ENCODE measurements at regions of chr19 and their contacts with region 1.

Region 1: GRCh38 chr19:56393119-56394012 is at the start of gene ZNF582:
- DNase-seq: peak; percentile 97
- ATAC-seq: peak; percentile 99
- H3K4me3 Mint-ChIP-seq: peak within 1 kb of the TSS; percentile 84
- H3K27ac Mint-ChIP-seq: peak within 1 kb of the TSS; percentile 96
- H3K4me1 Mint-ChIP-seq: peaks cover 11% of the 10 kb centered on the region
- H3K27me3 Mint-ChIP-seq: no peaks in the 10 kb centered on the region
- total RNA-seq, gene ZNF582: 0.98 to 1.8 TPM

Region 2: GRCh38 chr19:55301459-55302317 is 1091.7 kb before region 1 on chr19:
- CTCF ChIA-PET with region 1: no interaction called
- POLR2A ChIA-PET with region 1: no interaction called
- intact Hi-C with region 1: no loop called
- DNase-seq: peak; percentile 97
- ATAC-seq: peak; percentile 90
- H3K4me3 Mint-ChIP-seq: peak overlapping the region; percentile 81
- H3K27ac Mint-ChIP-seq: peak overlapping the region; percentile 90
- H3K4me1 Mint-ChIP-seq: peaks cover 6% of the 10 kb centered on the region
- H3K27me3 Mint-ChIP-seq: no peaks in the 10 kb centered on the region

Region 3: GRCh38 chr19:56321989-56322440 is 71.4 kb before region 1 on chr19:
- CTCF ChIA-PET with region 1: no interaction called
- POLR2A ChIA-PET with region 1: no interaction called
- intact Hi-C with region 1: no loop called
- DNase-seq: no peak
- ATAC-seq: no peak
- H3K4me3 Mint-ChIP-seq: no peak overlapping the region
- H3K27ac Mint-ChIP-seq: no peak overlapping the region
- H3K4me1 Mint-ChIP-seq: no peaks in the 10 kb centered on the region
- H3K27me3 Mint-ChIP-seq: peaks cover 8% of the 10 kb centered on the region

Region 4: GRCh38 chr19:56367829-56368711 is 25.3 kb before region 1 on chr19:
- CTCF ChIA-PET with region 1: interaction called, 11 read pairs
- POLR2A ChIA-PET with region 1: no interaction called
- intact Hi-C with region 1: loop called in 1 of 2 experiments (anchors 1 kb)
- DNase-seq: peak; percentile 92
- ATAC-seq: peak; percentile 99
- H3K4me3 Mint-ChIP-seq: peak overlapping the region; percentile 95
- H3K27ac Mint-ChIP-seq: peak overlapping the region; percentile 89
- H3K4me1 Mint-ChIP-seq: peaks cover 19% of the 10 kb centered on the region
- H3K27me3 Mint-ChIP-seq: no peaks in the 10 kb centered on the region

Region 5: DNA sequence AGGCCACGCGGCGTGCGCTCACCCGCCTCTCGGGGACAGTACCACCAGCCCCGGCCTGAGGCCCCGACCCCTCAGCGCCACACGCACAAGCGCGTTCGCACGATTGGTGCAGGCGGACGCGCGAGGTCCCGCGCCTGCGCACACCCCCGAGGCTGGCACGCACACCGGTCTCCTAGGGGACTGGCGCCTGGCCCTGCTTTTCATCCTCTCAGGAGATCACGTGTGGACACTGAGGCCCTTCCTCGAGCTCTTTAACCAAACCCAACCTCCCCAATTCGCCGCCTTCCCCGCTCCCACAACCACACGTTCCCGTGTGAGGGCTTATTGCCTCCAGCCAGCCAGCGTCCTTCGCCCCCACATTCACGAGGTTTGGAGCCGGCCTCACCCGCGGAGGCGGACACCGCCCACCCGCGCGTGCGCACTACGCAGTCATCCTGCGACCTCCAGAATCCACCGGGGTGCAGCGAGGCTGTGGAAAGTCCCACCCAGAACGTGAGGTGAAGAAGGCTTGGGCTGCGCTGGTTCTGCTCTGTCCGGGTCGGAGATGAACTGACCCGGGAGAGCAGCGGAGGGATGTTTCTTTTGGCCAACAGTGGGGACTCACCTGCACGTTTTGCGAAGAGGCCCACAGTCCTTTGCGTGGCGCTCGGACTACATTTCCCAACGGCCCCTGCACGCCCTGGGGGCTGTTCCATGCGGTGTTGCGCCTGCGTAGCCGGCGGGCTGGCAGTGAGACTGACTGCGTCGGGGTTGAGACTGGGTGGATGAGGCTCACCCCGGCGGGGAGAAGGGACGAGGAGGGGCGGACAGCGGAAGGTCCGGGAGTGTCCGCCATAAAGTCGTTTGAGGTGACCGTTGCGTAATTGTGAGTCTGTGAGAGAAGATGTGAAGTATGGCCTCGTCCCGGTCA is 84.3 kb after region 1 on chr19:
- CTCF ChIA-PET with region 1: no interaction called
- POLR2A ChIA-PET with region 1: no interaction called
- intact Hi-C with region 1: loop called in 1 of 2 experiments (anchors 1 kb)
- DNase-seq: peak; percentile 86
- ATAC-seq: peak; percentile 87
- H3K4me3 Mint-ChIP-seq: peak overlapping the region; percentile 85
- H3K27ac Mint-ChIP-seq: peak overlapping the region; percentile 94
- H3K4me1 Mint-ChIP-seq: peaks cover 15% of the 10 kb centered on the region
- H3K27me3 Mint-ChIP-seq: peaks cover 13% of the 10 kb centered on the region

Region 6: DNA sequence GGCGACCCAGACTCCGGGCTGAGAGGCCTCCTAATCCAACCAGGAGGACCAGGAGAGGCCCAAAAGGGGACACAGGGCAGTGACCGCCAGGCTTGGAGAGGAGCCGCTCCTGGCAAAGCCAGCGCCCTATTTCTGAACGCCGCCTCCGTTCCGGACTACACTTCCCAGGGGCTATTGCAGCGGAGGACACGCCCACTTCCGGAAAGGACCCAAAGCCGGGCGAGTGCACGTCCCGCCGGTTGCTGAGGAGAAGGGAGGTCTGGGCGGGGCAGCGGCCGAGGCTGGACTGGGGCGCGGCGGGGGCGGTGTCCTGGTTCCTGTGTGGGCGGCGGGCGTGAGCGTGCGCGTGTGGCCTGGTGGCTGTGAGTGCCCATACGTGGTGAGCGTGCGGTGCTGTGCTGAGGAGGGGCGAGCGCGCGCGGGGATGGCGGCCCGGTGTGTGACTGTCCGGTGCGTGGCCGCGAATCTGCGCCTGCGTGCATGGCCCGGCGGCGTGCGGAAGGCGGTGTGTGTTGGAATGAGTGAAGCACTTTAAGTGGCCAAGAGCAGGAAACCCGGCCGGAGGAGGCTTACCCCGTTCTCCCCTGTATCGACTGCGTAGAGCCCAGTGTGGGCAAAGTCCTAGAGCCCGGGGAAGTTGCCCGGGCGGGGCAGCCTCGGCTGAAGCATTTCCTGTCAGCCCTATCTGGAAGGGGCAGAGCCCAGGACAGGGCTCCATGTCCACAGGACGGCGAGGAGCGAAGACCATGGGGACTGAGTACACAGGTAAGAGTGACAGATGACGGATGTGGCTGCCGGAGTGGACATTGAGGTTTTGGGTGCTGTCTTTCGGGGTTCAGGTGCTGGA is 174.1 kb after region 1 on chr19 and contains the start of gene ZNF470:
- CTCF ChIA-PET with region 1: no interaction called
- POLR2A ChIA-PET with region 1: no interaction called
- intact Hi-C with region 1: loop called in 1 of 2 experiments (anchors 1 kb)
- DNase-seq: peak; percentile 94
- ATAC-seq: peak; percentile 97
- H3K4me3 Mint-ChIP-seq: peak within 1 kb of the TSS; percentile 88
- H3K27ac Mint-ChIP-seq: peak within 1 kb of the TSS; percentile 92
- H3K4me1 Mint-ChIP-seq: peaks cover 16% of the 10 kb centered on the region
- H3K27me3 Mint-ChIP-seq: no peaks in the 10 kb centered on the region
- total RNA-seq, gene ZNF470: 5.0 to 5.6 TPM

Region 7: GRCh38 chr19:56671613-56671994 is 278.2 kb after region 1 on chr19 and contains the start of gene ZNF835:
- CTCF ChIA-PET with region 1: no interaction called
- POLR2A ChIA-PET with region 1: no interaction called
- intact Hi-C with region 1: loop called in 1 of 2 experiments (anchors 1 kb)
- DNase-seq: peak; percentile 94
- ATAC-seq: peak; percentile 96
- H3K4me3 Mint-ChIP-seq: peak within 1 kb of the TSS; percentile 84
- H3K27ac Mint-ChIP-seq: peak within 1 kb of the TSS; percentile 87
- H3K4me1 Mint-ChIP-seq: peaks cover 11% of the 10 kb centered on the region
- H3K27me3 Mint-ChIP-seq: no peaks in the 10 kb centered on the region
- total RNA-seq, gene ZNF835: 2.8 to 4.5 TPM

Measured in activated CD4-positive, alpha-beta T cell treated with anti-CD3 and anti-CD28 coated beads for 36 hours (primary cell).